ENCODE measurements at regions of chr11 and their contacts with region 1.

Region 1: DNA sequence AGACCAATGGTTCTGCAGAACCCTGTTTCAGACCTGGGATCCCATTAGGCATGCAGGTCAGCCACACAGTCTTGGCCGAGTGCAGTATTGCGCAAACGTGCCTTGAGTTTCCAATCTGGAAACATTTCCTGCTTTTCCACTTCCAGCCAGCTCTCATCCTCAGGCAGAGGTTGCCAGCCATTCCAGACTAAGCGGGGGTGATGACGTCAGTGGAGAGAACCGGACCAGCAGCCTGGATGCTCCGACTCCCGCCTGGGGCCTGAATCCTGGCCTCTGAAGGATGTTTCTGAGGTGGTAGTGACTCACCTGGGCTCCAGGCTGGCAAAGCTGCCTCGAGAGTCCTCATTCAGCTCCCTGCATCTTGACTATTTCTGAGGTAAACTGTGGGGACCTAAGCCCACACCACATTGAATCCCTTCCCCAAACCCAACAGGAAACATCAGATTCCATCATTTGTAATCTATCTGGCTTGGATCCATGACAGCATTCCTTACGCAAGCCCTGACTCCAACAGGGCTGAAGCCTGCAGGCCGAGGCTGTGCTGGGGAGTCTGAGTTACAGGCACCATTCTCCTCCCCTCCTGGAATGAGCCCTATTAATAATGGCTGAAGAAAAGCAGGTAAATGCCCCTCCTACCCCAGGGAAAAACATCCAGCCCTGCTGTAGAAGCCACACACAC is 82.9 kb downstream of the ABTB2 start:
- DNase-seq: peak; percentile 99
- H3K4me3 ChIP-seq: no peak overlapping the region
- H3K27ac ChIP-seq: peak overlapping the region; percentile 45
- H3K4me1 ChIP-seq: peaks cover 18% of the 10 kb centered on the region
- H3K27me3 ChIP-seq: no peaks in the 10 kb centered on the region
- CTCF ChIP-seq: no peak

Region 2: GRCh38 chr11:34214961-34215805 is 59.7 kb before region 1 on chr11:
- CTCF ChIA-PET with region 1: no interaction called
- dilution Hi-C with region 1: no loop called
- in situ Hi-C with region 1: no loop called
- intact Hi-C with region 1: loop called (anchors 2 kb)
- DNase-seq: peak; percentile 97
- H3K4me3 ChIP-seq: no peak overlapping the region
- H3K27ac ChIP-seq: peak overlapping the region; percentile 50
- H3K4me1 ChIP-seq: peaks cover 12% of the 10 kb centered on the region
- H3K27me3 ChIP-seq: no peaks in the 10 kb centered on the region
- CTCF ChIP-seq: no peak

Region 3: DNA sequence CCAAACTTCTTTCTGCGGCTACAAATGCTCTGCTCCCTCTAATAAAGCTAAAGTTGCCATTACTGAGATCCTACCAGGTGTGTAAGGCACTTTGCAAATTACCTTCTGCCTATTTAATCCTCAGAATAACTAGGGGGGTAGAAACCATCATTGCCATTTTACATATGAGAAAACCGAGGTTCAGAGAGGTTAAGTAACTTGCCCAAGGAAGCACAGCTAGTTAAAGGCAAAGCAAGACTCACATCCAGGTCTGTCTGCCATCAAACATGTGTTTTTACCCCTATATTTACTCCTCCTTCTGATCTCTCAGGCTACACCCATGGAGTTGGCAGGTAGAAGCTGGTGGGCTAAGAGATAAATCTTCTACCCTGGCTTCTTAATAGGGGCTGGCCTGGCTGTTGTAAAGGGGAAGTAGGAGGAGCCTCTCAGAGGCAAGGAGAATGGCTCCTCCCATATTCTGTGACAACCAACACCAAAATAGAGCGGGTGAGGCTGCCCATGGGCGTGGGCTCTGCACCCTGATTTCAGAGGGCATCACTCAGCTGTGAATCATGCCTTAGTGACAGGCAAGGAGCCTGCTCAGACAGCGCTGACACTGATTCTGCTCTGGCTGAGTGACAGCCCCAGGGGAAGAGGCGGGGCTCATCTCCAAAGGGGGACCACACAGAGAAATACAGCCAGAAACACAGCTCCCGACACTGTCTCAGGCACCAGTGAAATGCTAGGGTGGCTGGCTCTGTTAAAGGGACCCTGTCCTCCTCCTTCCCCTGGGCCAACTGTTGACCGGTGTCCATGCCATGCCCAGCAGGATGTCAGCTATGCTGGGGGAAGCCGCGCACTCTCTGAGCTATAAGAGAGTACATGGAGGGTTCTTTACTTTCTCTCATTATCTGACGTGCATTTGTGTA is 23.9 kb before region 1 on chr11:
- CTCF ChIA-PET with region 1: no interaction called
- dilution Hi-C with region 1: no loop called
- in situ Hi-C with region 1: no loop called
- intact Hi-C with region 1: loop called (anchors 2 kb)
- DNase-seq: peak; percentile 84
- H3K4me3 ChIP-seq: no peak overlapping the region
- H3K27ac ChIP-seq: no peak overlapping the region
- H3K4me1 ChIP-seq: peaks cover 10% of the 10 kb centered on the region
- H3K27me3 ChIP-seq: no peaks in the 10 kb centered on the region
- CTCF ChIP-seq: no peak

Measured in mammary epithelial cell (primary cell).